GM13977 (cell line): ENCODE measurements at regions of chr4 and their contacts with region 1.

Region 1: DNA sequence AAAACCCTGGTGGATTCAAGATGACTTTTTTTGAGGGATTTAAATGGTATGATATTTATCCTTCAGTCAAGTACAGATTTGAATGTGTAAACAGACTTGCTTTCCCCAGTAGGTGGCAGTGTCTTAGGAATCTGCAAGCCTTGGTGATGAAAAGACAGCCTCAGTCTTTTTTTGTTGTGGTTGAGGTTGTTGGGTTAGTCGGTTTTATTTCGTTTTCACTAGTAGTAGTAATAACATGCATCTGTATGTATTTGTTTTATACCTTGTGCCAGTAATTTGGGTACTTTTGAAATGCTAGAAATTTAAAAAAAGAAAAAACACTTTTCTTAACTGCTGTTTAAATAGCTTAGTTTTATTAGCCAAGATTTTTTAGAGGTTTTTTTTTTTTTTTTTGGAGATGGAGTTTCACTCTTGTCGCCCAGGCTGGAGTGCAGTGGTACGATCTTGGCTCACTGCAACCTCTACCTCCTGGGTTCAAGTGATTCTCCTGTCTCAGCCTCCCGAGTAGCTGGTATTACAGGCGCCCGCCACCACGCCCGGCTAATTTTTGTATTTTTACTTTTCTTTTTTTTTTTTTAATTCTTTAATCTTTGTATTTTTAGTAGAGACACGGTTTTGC is 39.2 kb downstream of the COPS4 start:
- DNase-seq: peak; percentile 77
- CTCF ChIP-seq: peak; percentile 72

Region 2: DNA sequence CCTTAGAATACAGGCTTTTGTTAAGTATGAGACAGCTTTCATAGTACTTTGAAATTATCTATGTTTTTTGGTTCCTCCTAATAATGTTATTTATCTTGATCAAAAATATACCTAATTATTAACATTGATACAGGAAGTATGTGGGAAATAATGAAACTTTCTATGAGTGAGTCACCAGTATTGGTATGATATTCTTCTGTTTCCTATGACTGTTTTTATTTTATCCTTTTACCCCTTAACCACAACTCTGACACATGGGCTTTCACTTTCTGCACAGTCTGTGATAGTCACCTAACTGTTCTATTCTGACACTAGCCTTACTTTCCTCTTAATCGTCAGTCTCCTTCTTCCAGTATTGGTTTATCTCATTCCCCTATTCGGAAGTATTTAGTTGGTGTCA is 169.0 kb before region 1 on chr4:
- in situ Hi-C with region 1: no loop called
- DNase-seq: peak; percentile 73
- CTCF ChIP-seq: no peak

Region 3: DNA sequence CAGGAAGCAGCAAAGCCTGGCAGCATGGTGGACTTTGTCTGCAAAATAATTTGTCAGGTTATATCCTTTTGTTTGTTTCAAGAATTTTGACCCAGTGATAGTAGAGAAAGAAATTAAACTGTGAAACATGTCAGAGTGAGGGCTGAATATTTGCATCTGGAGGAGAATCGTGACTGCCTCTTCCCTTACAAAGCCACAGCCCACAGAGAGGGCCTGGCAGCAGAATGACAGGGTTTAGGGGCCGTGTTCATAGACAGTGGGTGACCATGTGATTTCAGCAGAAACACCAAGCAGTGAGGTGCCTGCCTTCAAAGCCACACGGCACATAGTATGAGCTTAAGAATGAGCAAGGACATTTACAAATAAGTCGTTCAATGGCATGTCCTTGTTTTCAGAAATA is 64.8 kb after region 1 on chr4:
- in situ Hi-C with region 1: no loop called
- DNase-seq: no peak
- CTCF ChIP-seq: no peak

Region 4: GRCh38 chr4:83267121-83267829 is 193.1 kb after region 1 on chr4:
- in situ Hi-C with region 1: loop called (anchors 10 kb)
- DNase-seq: no peak
- CTCF ChIP-seq: no peak

Region 5: GRCh38 chr4:83455281-83456129 is 381.3 kb after region 1 on chr4 and contains the starts of genes HELQ and MRPS18C:
- in situ Hi-C with region 1: loop called (anchors 25 kb)
- DNase-seq: peak; percentile 92
- CTCF ChIP-seq: peak; percentile 23